PC-9 (cell line): ENCODE measurements at regions of chr19 and their contacts with region 1.

Region 1: GRCh38 chr19:55476100-55476775 is at the start of gene ZNF628:
- DNase-seq: peak; percentile 95 to 99
- H3K4me3 ChIP-seq: peak within 1 kb of the TSS; percentile 68
- H3K27ac ChIP-seq: peak within 1 kb of the TSS; percentile 72
- H3K4me1 ChIP-seq: peaks cover 38% of the 10 kb centered on the region
- H3K27me3 ChIP-seq: no peaks in the 10 kb centered on the region
- CTCF ChIP-seq: no peak
- total RNA-seq, gene ZNF628: 17.7 and 19.3 TPM in 2 replicates

Region 2: DNA sequence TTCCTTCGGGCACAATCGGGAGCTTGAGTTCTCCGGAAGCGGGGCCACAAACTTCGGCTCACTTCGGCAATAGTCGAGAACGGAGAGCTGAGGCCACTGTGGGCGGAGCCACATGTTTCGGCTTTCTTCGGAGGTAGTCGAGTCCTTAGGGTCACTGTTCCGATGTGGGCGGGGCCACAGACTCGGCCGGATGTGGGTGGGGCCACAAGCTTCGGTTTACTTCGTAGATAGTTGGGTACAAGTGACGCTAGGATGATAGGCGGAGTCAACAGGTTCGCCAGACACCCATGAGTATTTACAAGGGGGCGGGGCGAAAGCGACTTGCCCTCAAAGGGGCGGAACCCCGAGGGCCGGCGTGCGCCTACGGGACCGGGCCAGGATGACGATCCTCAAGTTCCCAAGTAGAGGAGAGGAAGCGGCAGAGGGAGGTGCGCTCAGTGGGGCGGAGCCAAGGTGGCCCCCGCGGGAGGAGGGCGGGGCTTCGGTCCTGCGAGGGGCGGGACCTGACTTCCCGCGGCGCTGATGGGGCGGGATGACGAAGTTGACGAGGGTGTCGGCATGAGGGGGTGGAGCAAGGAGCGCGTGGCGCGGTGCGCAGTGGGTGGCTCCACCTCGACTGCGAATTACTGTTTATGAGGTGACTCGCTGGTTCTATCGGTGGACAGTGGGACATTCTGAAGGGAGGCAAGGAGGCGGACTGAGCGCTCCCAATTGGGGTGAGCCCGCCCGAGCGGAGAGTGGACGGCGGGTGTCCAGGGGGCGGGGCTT is 1286.3 kb before region 1 on chr19:
- CTCF ChIA-PET with region 1: no interaction called
- POLR2A ChIA-PET with region 1: no interaction called
- intact Hi-C with region 1: loop called (anchors 5 kb)
- DNase-seq: peak; percentile 100
- H3K4me3 ChIP-seq: peak overlapping the region; percentile 77
- H3K27ac ChIP-seq: peak overlapping the region; percentile 93
- H3K4me1 ChIP-seq: peaks cover 24% of the 10 kb centered on the region
- H3K27me3 ChIP-seq: no peaks in the 10 kb centered on the region
- CTCF ChIP-seq: no peak

Region 3: DNA sequence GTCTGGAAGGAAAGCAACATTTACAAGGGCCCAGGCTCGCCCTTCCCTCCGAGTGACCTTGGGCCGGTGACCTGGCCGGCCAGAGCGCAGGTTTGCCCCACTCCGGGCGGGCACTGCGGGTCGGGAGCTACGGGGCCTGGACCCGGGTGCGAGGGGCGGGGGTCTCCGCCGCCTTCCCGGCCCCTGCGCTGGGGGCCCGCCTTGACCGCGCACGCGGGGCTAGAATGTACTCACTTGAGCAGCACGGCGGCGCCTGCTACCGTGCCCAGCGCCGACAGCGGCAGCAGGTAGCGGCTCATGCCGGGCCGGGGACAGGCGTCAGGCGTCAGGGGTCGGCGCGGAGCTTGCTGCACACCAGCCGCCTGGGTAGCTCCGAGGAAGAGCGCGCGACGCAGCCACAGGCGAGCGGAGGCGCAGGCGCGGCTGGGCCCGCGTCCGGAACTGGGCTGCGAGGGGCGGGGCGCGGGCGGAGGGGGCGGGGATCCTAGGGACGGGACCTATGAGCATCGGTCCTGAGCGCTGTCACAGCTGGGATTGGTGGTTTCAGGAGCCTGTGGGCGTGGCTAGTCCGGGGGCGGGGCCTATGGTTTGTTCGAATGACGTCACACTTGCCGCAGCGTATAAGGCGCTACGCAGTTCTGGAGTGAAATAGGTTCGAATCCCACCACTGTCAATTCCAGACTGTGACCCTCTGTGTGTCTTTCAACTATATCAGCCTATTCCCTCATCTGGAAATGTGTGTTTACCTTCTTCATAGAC is 413.3 kb before region 1 on chr19 and contains the start of gene RDH13:
- CTCF ChIA-PET with region 1: no interaction called
- POLR2A ChIA-PET with region 1: no interaction called
- intact Hi-C with region 1: loop called (anchors 10 kb)
- DNase-seq: peak; percentile 95 to 98
- H3K4me3 ChIP-seq: peak within 1 kb of the TSS; percentile 100
- H3K27ac ChIP-seq: peak within 1 kb of the TSS; percentile 71
- H3K4me1 ChIP-seq: peaks cover 16% of the 10 kb centered on the region
- H3K27me3 ChIP-seq: no peaks in the 10 kb centered on the region
- CTCF ChIP-seq: no peak; the same call in 1 of the 2 replicates
- total RNA-seq, gene RDH13: 39.8 and 42.1 TPM in 2 replicates

Region 4: DNA sequence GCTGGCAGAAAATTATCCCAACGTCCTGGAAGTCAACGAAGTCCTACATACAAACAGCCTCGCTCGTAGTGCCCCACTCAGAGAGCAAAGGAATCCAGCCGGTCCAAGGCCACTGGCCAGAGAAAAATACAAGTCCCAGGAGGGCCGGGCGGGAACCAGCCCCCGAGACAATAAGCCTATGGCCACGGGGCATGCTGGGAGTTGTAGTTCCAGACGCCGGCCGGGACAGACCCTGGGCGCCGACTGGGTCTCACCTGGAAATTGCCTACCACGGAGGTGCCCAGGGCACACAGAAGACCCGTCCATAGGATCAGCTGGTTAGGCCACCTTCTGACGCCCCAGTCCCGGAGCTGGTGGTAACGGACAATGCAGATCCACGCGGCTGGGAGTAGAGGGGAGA is 156.5 kb before region 1 on chr19:
- CTCF ChIA-PET with region 1: no interaction called
- POLR2A ChIA-PET with region 1: no interaction called
- intact Hi-C with region 1: no loop called
- DNase-seq: no peak
- H3K4me3 ChIP-seq: no peak overlapping the region
- H3K27ac ChIP-seq: no peak overlapping the region
- H3K4me1 ChIP-seq: 0 out of 2 replicates have a peak, but pooled peaks cover 3% of the 10 kb centered on the region
- H3K27me3 ChIP-seq: no peaks in the 10 kb centered on the region
- CTCF ChIP-seq: no peak

Region 5: GRCh38 chr19:55461259-55461973 is 14.8 kb before region 1 on chr19 and contains the start of gene ISOC2:
- CTCF ChIA-PET with region 1: interaction called, 6 read pairs
- POLR2A ChIA-PET with region 1: interaction called, 13 read pairs
- intact Hi-C with region 1: no loop called
- DNase-seq: peak; percentile 99 to 100
- H3K4me3 ChIP-seq: peak within 1 kb of the TSS; percentile 90
- H3K27ac ChIP-seq: peak within 1 kb of the TSS; percentile 68
- H3K4me1 ChIP-seq: peaks cover 12% of the 10 kb centered on the region
- H3K27me3 ChIP-seq: no peaks in the 10 kb centered on the region
- CTCF ChIP-seq: no peak
- total RNA-seq, gene ISOC2: 92.4 and 113 TPM in 2 replicates

Region 6: DNA sequence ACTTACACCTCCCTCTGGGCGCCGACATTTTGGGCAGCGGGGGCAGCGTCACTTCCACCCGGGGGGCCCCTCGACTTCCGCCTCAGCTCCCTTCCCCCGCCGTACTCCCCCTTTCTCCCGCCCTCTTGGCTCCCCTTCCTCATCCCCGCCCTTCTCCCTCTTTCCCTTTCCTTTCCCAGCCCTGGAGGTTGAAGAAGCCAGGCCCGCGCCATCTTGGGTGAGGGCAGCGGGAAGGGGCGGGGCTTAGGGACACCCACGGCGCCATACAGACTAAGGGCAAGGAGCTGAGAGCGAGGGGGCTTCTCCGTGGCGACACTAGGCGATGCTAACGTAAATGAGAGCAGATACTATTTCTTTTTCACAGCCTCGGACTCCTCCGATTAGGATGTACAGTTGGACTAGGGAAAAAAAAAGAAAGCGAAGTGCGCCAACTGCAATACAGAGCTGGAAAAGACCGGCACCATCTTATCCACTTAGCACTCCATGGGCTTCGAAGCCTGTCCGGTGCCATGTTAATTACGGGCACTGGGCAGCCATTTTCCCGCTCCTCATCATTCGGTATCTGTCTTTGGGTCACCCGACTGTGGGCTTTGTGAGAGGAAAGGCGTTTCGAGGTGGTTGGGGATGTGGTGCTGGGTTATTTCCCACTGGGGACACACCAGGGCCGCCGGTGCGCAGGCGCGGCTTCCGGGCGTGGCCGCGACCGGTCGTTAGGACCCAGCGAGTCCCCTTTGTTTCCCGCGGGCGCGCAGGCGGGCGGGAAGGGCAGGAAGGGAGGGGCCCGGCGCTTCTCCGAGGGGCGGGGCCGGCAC is 123.4 kb after region 1 on chr19 and contains the start of gene FIZ1:
- CTCF ChIA-PET with region 1: no interaction called
- POLR2A ChIA-PET with region 1: interaction called, 15 read pairs
- intact Hi-C with region 1: loop called (anchors 2 kb)
- DNase-seq: peak; percentile 93 to 98
- H3K4me3 ChIP-seq: peak within 1 kb of the TSS; percentile 91
- H3K27ac ChIP-seq: peak within 1 kb of the TSS; percentile 94
- H3K4me1 ChIP-seq: peaks cover 22% of the 10 kb centered on the region
- H3K27me3 ChIP-seq: no peaks in the 10 kb centered on the region
- CTCF ChIP-seq: 0 out of 2 replicates have a peak, but pooled peaks have one; percentile 16
- total RNA-seq, gene FIZ1: 25.2 and 25.4 TPM in 2 replicates

Region 7: GRCh38 chr19:55605207-55605636 is 129.0 kb after region 1 on chr19:
- CTCF ChIA-PET with region 1: no interaction called
- POLR2A ChIA-PET with region 1: interaction called, 11 read pairs
- intact Hi-C with region 1: loop called (anchors 2 kb)
- DNase-seq: peak; percentile 93 to 100
- H3K4me3 ChIP-seq: peak overlapping the region; percentile 79
- H3K27ac ChIP-seq: peak overlapping the region; percentile 66
- H3K4me1 ChIP-seq: peaks cover 29% of the 10 kb centered on the region
- H3K27me3 ChIP-seq: no peaks in the 10 kb centered on the region
- CTCF ChIP-seq: no peak